Calu3 (cell line): ENCODE measurements at regions of chr6 and their contacts with region 1.

Region 1: DNA sequence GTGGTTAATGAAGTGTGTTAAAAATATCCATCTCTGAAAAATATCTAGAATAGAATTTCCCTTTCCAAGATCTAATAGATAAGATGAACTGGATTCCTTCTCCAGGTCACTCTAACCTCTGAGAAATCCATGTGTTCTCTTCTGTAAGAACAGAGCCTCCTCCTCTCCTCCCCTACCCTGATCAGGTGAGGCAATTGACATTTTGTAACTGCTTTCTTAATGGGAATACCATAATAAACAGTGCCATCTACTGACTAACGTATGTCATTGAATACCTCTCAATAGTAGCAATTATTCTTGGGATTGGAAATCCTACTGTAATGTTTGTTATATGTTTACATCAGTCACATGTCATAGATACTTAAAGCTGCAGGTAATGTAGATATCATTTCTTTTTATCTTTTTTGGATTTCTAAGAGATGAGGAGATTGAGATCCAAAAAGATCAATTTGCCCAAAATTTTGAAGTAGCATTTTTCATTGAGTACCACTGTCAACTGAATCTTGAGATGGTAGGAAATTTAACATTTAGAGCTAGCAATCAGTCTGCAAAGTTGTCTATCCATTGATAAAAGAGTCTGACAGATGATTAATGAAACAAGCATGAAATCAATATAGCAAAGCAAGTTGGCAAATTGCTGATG is 365.8 kb upstream of the HSF2 start:
- DNase-seq: peak; percentile 9
- H3K4me3 Mint-ChIP-seq: no peak overlapping the region
- H3K27ac Mint-ChIP-seq: no peak overlapping the region
- H3K4me1 Mint-ChIP-seq: peaks cover 12% of the 10 kb centered on the region
- H3K27me3 Mint-ChIP-seq: no peaks in the 10 kb centered on the region
- CTCF ChIP-seq: no peak

Region 2: GRCh38 chr6:121867095-121867494 is 166.6 kb before region 1 on chr6:
- CTCF ChIA-PET with region 1: no interaction called
- intact Hi-C with region 1: loop called (anchors 5 kb)
- DNase-seq: no peak
- H3K4me3 Mint-ChIP-seq: no peak overlapping the region
- H3K27ac Mint-ChIP-seq: no peak overlapping the region
- H3K4me1 Mint-ChIP-seq: no peaks in the 10 kb centered on the region
- H3K27me3 Mint-ChIP-seq: no peaks in the 10 kb centered on the region
- CTCF ChIP-seq: no peak

Region 3: GRCh38 chr6:122184401-122184827 is 150.8 kb after region 1 on chr6:
- CTCF ChIA-PET with region 1: no interaction called
- intact Hi-C with region 1: loop called (anchors 5 kb)
- DNase-seq: no peak
- H3K4me3 Mint-ChIP-seq: no peak overlapping the region
- H3K27ac Mint-ChIP-seq: no peak overlapping the region
- H3K4me1 Mint-ChIP-seq: no peaks in the 10 kb centered on the region
- H3K27me3 Mint-ChIP-seq: no peaks in the 10 kb centered on the region
- CTCF ChIP-seq: no peak

Region 4: GRCh38 chr6:122372647-122373046 is 339.0 kb after region 1 on chr6:
- CTCF ChIA-PET with region 1: no interaction called
- intact Hi-C with region 1: loop called (anchors 10 kb)
- DNase-seq: no peak
- H3K4me3 Mint-ChIP-seq: no peak overlapping the region
- H3K27ac Mint-ChIP-seq: no peak overlapping the region
- H3K4me1 Mint-ChIP-seq: peaks cover 12% of the 10 kb centered on the region
- H3K27me3 Mint-ChIP-seq: no peaks in the 10 kb centered on the region
- CTCF ChIP-seq: no peak